HepG2 (cell line): ENCODE measurements at regions of chr1 and their contacts with region 1.

Region 1: GRCh38 chr1:172616195-172616970 is 42.5 kb upstream of the FASLG start:
- DNase-seq: no peak
- ATAC-seq: no peak
- H3K4me3 ChIP-seq: no peak overlapping the region
- H3K27ac ChIP-seq: no peak overlapping the region
- H3K4me1 ChIP-seq: peaks cover 9% of the 10 kb centered on the region
- H3K27me3 ChIP-seq: no peaks in the 10 kb centered on the region; a peak in 1 of 5 replicates
- CTCF ChIP-seq: no peak
- EP300 ChIP-seq: no peak
- POLR2A ChIP-seq: no peak
- RAD21 ChIP-seq: no peak

Region 2: DNA sequence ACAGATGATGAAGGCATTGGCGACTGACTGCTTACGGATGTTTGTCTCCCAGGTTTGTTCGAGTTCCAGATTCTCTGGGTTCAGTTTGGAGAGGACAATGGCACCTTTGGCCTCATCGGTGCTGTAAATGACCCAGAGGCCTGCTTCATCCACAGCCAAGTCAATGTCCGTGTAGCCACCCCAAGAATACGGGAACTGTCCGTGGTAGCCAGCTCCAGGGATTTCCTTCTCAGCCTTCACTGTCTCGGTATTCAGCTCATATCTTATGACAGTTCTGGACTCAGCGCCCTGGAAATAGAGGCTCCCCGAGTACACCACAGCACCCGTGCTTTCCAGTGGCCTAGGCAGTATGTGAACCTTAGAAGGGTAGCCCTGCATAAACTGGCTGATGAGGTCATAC is 980.2 kb before region 1 on chr1:
- CTCF ChIA-PET with region 1: no interaction called
- POLR2A ChIA-PET with region 1: no interaction called
- in situ Hi-C with region 1: no loop called
- intact Hi-C with region 1: loop called (anchors 5 kb)
- DNase-seq: no peak
- ATAC-seq: no peak
- H3K4me3 ChIP-seq: no peak overlapping the region
- H3K27ac ChIP-seq: no peak overlapping the region
- H3K4me1 ChIP-seq: peaks cover 14% of the 10 kb centered on the region
- H3K27me3 ChIP-seq: peaks cover 2 to 3% of the 10 kb centered on the region in 2 experiments; a peak in 2 of 5 replicates
- CTCF ChIP-seq: no peak
- EP300 ChIP-seq: no peak
- POLR2A ChIP-seq: no peak
- RAD21 ChIP-seq: no peak

Region 3: DNA sequence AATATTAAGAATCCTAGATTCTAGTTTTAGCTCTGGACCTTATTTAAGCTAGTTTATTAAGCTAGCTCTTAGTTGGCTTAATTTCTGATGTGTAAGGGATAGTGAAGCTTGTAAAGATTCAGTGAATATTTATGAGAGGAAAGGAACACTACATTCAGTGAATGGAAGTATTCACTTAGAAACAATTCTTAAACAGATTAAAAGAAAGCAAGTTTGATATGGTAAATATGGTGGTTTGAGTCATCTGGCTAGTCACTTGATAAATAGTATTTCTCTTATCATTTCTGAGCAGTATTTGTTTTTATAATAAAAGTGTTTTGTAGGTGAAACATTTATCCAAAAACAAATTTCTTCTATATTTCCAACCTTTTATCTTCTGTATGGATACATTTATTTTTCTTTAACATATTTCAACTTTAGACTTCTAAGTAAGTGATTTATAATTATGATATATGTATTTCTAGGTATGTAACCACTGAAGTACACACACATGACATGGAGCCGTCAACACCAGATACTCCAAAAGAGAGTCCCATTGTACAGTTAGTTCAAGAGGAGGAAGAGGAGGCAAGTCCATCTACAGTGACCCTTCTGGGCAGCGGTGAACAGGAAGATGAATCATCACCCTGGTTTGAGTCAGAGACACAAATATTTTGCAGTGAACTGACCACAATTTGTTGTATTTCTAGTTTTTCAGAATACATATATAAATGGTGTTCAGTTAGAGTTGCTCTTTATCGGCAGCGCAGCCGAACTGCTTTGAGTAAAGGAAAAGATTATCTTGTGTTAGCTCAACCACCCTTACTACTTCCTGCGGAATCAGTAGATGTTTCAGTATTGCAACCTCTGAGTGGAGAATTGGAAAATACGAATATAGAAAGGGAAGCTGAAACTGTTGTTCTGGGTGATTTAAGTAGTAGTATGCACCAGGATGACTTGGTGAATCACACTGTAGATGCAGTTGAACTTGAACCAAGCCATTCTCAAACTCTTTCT is 27.8 kb before region 1 on chr1:
- CTCF ChIA-PET with region 1: no interaction called
- POLR2A ChIA-PET with region 1: no interaction called
- in situ Hi-C with region 1: no loop called
- intact Hi-C with region 1: no loop called
- DNase-seq: peak; percentile 15
- ATAC-seq: no peak
- H3K4me3 ChIP-seq: no peak overlapping the region
- H3K27ac ChIP-seq: no peak overlapping the region
- H3K4me1 ChIP-seq: no peaks in the 10 kb centered on the region
- H3K27me3 ChIP-seq: no peaks in the 10 kb centered on the region
- CTCF ChIP-seq: no peak
- EP300 ChIP-seq: no peak
- POLR2A ChIP-seq: no peak
- RAD21 ChIP-seq: no peak

Region 4: GRCh38 chr1:173002891-173003838 is 386.8 kb after region 1 on chr1:
- CTCF ChIA-PET with region 1: no interaction called
- POLR2A ChIA-PET with region 1: no interaction called
- in situ Hi-C with region 1: no loop called
- intact Hi-C with region 1: no loop called
- DNase-seq: no peak
- ATAC-seq: no peak
- H3K4me3 ChIP-seq: no peak overlapping the region
- H3K27ac ChIP-seq: no peak overlapping the region
- H3K4me1 ChIP-seq: 0 out of 2 replicates have a peak, but pooled peaks cover 9% of the 10 kb centered on the region
- H3K27me3 ChIP-seq: no peaks in the 10 kb centered on the region; a peak in 1 of 5 replicates
- CTCF ChIP-seq: no peak
- EP300 ChIP-seq: no peak
- POLR2A ChIP-seq: no peak
- RAD21 ChIP-seq: no peak